Activated T-helper 2 cell treated with anti-CD3 and anti-CD28 coated beads, Interferon-gamma antibody, Interleukin-2, Interleukin-4, amounts not matched to agents 10 μg/mL and 5 μg/mL and 100 μg/mL, durations not matched to agents 14 hours and 24 hours and 36 hours (primary cell): ENCODE measurements at regions of chr2 and their contacts with region 1.

Region 1: GRCh38 chr2:202375609-202376408 is at the start of gene BMPR2:
- DNase-seq: peak; percentile 81
- H3K4me3 Mint-ChIP-seq: peak within 1 kb of the TSS; percentile 96
- H3K27ac Mint-ChIP-seq: peak within 1 kb of the TSS; percentile 73
- H3K4me1 Mint-ChIP-seq: peaks cover 24% of the 10 kb centered on the region
- H3K27me3 Mint-ChIP-seq: peaks cover 13% of the 10 kb centered on the region
- total RNA-seq, gene BMPR2: 10.0 and 11.3 TPM in 2 replicates

Region 2: GRCh38 chr2:201780674-201781581 is 594.9 kb before region 1 on chr2 and contains the start of gene ALS2:
- intact Hi-C with region 1: loop called (anchors 2 kb)
- DNase-seq: peak; percentile 90
- H3K4me3 Mint-ChIP-seq: peak within 1 kb of the TSS; percentile 97
- H3K27ac Mint-ChIP-seq: peak within 1 kb of the TSS; percentile 95
- H3K4me1 Mint-ChIP-seq: peaks cover 19% of the 10 kb centered on the region
- H3K27me3 Mint-ChIP-seq: peaks cover 11% of the 10 kb centered on the region
- total RNA-seq, gene ALS2: 11.3 and 14.3 TPM in 2 replicates

Region 3: DNA sequence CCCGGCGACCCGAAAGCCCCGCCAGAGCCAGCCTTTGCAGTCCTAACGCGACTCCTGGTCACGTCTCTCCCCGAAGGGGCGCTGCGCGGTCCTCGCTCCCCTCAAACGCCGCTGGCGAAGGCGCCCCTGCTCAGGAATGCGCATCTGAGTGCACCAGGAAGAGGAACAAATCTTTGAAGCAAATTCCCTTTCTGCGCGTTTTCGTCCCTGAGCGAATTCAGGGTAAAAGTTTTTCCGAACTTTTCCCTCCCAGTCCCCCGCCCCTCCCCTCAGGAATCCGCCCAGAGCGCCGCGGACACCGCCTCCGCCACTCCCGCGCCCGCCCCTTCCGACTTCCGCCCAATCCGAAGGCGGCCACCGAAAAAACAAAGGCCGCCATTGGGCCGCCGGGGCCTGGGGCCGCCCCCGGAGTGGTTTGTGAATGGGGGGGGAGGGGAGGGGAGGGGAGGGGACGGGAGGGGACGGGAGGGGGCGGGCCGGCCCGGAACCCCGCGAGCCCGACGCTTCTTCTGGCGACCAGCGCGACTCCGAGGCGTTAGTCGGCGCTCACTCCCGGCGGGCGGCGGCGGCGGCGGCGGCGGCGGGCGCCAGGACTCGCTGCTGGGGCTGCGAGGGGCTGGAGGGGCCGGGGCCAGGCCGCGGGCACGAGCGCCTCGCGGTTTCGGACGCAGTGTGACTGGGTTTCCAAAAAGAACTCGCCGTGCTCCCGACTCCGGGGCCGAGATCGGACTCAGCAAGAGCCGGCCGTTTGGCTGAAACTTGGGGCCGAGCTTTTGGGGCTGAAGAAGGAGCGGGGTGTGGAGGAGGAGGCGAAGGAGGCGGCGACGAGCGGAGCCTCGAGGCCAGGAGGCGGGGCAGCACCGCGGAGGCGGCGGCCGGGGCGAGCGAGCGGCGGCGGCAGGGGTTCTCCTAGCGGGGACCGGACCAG is 342.2 kb before region 1 on chr2 and contains the start of gene FZD7:
- intact Hi-C with region 1: loop called (anchors 5 kb)
- DNase-seq: peak; percentile 79
- H3K4me3 Mint-ChIP-seq: peak within 1 kb of the TSS; percentile 83
- H3K27ac Mint-ChIP-seq: no peak within 1 kb of the TSS
- H3K4me1 Mint-ChIP-seq: peaks cover 11% of the 10 kb centered on the region
- H3K27me3 Mint-ChIP-seq: peaks cover 50% of the 10 kb centered on the region
- total RNA-seq, gene FZD7: 1.1 and 1.4 TPM in 2 replicates

Region 4: DNA sequence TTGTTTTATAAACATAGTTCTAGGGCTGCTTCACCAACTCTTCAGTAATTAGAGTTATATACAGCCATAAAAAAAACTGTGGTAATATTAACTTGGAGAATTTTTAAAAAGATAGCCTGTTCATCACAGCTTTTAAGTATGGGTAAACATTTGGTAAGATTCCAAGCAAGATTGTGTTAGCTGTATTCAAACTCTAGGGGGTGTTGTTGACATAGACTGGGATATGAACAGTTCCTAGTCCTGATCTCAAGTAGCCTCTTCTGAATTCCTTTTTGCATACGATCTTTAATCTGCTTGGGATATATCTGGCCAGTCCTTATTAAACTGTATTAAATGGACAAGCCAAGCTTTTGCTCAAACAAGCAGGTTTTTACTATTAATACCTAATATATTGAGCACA is 96.9 kb before region 1 on chr2:
- intact Hi-C with region 1: loop called (anchors 5 kb)
- DNase-seq: no peak
- H3K4me3 Mint-ChIP-seq: no peak overlapping the region
- H3K27ac Mint-ChIP-seq: peak overlapping the region; percentile 52
- H3K4me1 Mint-ChIP-seq: peaks cover 29% of the 10 kb centered on the region
- H3K27me3 Mint-ChIP-seq: no peaks in the 10 kb centered on the region

Region 5: GRCh38 chr2:202307690-202308089 is 68.1 kb before region 1 on chr2:
- intact Hi-C with region 1: loop called (anchors 5 kb)
- DNase-seq: no peak
- H3K4me3 Mint-ChIP-seq: no peak overlapping the region
- H3K27ac Mint-ChIP-seq: no peak overlapping the region
- H3K4me1 Mint-ChIP-seq: peaks cover 8% of the 10 kb centered on the region
- H3K27me3 Mint-ChIP-seq: no peaks in the 10 kb centered on the region

Region 6: GRCh38 chr2:202510911-202511310 is 135.1 kb after region 1 on chr2:
- intact Hi-C with region 1: loop called (anchors 10 kb)
- DNase-seq: no peak
- H3K4me3 Mint-ChIP-seq: no peak overlapping the region
- H3K27ac Mint-ChIP-seq: no peak overlapping the region
- H3K4me1 Mint-ChIP-seq: peaks cover 3% of the 10 kb centered on the region
- H3K27me3 Mint-ChIP-seq: no peaks in the 10 kb centered on the region